ENCODE measurements at regions of chr11 and their contacts with region 1.

Region 1: GRCh38 chr11:117985953-117986887 is at the start of gene IL10RA:
- DNase-seq: peak; percentile 96
- CTCF ChIP-seq: no peak

Region 2: DNA sequence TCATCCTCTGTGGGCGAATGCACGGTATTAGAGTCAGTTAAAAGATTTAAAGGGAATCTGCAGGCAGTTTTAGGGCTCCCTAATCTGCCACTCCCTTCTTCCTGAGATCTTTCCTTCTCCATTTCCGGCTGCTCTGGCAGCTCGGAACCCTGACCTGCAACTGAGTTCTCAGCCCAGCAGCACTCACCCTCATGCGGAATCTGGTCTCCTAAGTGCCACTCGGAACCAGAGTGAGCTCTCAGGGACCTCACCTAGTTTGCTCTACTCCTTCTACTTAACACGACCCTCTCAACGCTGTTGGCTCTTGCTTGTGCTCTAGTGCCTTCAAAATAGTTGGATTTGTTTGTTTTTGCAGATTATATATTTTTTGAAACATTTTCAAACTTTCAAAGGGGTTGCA is 19.3 kb before region 1 on chr11:
- CTCF ChIA-PET with region 1: no interaction called
- POLR2A ChIA-PET with region 1: no interaction called
- DNase-seq: no peak
- CTCF ChIP-seq: no peak

Region 3: GRCh38 chr11:118002541-118003423 is 16.6 kb after region 1 on chr11:
- CTCF ChIA-PET with region 1: interaction called, 16 read pairs
- POLR2A ChIA-PET with region 1: interaction called, 38 read pairs
- DNase-seq: no peak
- CTCF ChIP-seq: no peak

Region 4: DNA sequence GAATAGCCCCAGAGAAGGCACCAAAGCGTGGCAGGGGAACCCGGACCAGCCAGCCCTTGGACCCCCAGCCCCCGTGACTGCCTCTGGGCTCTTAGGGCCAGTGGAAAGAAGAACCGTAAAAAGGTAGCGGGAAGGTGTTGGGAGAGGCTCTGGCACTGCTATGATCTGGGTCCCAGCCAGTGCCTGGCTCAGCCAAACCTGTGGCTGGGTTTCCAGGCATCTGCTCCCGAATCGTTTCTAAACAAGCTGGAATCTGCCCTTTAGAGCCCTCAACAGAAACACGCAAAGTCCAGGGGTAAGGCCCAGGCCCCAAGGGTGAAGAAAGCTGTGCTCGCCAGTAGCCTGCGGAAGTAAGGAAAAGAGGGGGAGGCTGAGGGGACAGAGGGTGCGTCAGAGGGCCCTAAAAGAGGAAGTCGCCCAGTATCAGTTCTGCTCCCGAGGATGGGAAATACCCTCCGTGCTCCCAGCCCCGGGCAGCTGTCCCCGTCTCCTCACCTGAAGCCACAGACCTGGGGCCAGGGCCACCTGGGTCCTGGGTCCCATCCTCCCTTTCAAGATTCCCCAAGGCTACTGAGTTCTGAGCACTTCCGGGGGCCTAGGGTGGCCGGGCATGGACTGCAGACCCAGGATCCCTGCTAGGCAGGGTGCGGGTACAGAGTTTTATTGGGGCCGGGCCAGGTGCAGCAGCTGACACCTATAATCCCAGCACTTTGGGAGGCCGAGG is 24.7 kb after region 1 on chr11:
- CTCF ChIA-PET with region 1: interaction called, 14 read pairs
- POLR2A ChIA-PET with region 1: interaction called, 7 read pairs
- DNase-seq: peak; percentile 90
- CTCF ChIP-seq: no peak

Measured in GM10248 (cell line).